Vagina (tissue), 2 donors: ENCODE measurements at regions of chrX and their contacts with region 1.

Region 1: DNA sequence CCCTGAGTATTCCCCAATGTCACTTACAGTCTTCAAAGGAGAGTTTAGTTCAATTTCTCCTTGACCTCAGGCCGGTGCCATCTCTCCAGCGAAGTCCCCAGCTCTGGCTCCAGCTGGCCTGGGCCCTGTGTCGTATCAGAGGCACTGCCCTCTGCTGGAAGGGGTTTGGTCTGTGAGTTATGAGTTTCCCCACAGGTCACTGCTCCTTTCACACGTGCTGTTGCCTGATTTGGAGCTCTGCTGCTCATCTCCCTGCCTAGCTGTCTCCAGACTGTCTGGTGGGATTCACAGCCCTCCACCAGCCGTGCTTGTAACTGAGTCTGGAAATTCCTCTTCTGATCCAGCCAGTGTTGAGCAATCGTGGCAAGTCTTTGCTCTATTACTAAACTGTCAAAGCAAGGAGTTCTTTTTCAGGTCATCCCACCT is at the start of gene RAP2C:
- DNase-seq: no peak
- H3K4me3 ChIP-seq: peak within 1 kb of the TSS; percentile 67 to 70
- H3K27ac ChIP-seq: peak within 1 kb of the TSS; percentile 93
- H3K4me1 ChIP-seq: peaks cover 17% of the 10 kb centered on the region
- H3K27me3 ChIP-seq: no peaks in the 10 kb centered on the region
- CTCF ChIP-seq: peak in 2 of 3 experiments; percentile 44 to 48
- POLR2A ChIP-seq: no peak
- total RNA-seq, gene RAP2C: 11.8 TPM

Region 2: DNA sequence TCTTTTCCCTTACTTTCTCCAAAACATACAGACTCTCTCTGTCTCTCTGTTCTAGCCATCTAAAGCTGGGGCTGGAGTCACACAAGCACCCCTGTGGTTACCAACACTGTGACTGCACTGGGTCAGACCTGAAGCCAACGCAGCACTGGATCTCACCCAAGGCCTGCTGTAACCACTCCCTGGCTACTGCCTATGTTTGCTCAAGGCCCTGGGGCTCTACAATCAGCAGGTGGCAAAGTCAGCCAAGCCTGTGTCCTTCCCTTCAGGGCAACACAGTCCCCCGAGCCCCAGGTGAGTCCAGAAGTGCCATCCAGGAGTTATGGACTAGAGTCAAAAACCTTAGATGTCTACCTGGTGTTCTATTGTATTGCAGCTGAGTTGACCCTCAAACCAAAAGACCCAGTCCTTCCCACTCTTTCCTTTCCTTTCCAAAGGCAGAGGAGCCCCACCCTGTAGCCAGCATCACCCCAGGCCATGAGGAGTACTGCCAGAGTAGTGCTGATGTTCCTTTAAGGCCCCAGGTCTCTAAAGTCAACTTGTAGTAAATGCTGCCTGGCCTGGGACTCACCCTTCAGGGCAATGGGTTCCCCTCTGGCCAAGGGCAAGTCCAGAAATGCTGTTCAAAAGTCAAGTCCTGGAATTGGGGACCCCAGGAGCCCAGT is 58.7 kb after region 1 on chrX:
- intact Hi-C with region 1: loop called (anchors 2 kb)
- DNase-seq: no peak
- H3K4me3 ChIP-seq: no peak overlapping the region
- H3K27ac ChIP-seq: no peak overlapping the region
- H3K4me1 ChIP-seq: no peaks in the 10 kb centered on the region
- H3K27me3 ChIP-seq: no peaks in the 10 kb centered on the region
- CTCF ChIP-seq: no peak
- POLR2A ChIP-seq: no peak